ENCODE measurements at regions of chr7 and their contacts with region 1.

Region 1: DNA sequence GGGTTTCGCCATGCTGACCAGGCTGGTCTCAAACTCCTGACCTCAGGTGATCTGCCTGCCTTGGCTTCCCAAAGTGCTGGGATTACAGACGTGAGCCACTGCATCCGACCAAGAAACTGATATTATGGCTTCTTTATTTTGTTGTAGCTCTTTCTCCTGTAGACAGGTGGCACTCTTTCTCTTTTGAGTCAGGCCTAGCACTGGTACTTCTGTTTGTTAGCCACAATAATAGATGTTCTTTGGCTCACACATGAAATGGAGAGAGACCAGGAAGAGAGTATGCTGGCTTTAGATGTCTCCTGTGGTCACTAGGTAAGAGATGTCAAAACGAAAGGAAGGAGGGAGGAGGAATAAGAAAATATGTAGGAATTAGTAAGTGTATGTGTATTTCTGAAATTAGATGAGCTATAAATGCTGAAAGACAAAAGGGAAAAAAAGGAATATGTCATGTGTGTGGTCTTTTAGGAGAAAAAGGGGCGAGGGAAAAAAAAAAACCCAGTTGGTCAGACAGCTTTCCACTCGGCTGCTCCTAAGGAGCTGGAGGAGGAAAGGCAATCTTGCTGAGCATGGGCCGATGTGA is 78.7 kb downstream of the CLEC2L start:
- DNase-seq: peak; percentile 53 to 65 (median 60)
- ATAC-seq: peak; percentile 93
- H3K4me3 ChIP-seq: no peak overlapping the region
- H3K27ac ChIP-seq: no peak overlapping the region
- H3K4me1 ChIP-seq: peaks cover 0 to 9% of the 10 kb centered on the region in 2 experiments; a peak in 3 of 5 replicates
- H3K27me3 ChIP-seq: no peaks in the 10 kb centered on the region
- CTCF ChIP-seq: peak; percentile 68 to 81 (median 69)
- EP300 ChIP-seq: no peak
- POLR2A ChIP-seq: no peak
- RAD21 ChIP-seq: peak; percentile 80 to 89

Region 2: DNA sequence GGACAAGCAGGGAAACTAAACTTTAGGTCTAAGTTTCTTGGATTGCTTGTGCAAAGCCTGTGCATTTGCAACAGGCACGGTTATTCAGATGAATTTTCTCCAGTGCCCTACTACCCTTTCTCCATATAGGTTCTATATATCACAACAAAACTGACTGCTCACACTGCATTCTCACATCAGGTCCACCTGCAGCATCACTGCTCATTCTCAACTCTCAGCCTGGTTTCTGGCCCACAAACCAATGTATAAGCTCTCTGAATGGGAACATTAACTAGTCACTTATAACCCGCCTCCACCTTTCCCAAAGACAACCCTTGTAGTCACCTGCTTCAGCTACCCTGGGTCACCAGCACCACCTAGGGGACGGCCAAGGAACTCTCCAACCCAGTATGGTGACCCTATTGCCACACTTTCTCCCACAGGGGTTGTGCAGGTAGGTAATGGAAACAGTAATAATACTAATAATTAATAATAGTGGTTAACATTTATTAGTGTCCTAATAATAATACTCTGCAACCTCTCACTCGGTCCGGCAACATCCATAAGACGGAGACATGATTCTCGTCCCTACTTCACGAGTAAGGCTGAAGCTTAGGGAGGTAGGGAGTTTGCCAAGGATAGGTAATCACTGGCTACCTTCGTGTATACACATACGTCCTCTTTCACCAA is 18.6 kb after region 1 on chr7:
- CTCF ChIA-PET with region 1: interaction called, 17 read pairs
- POLR2A ChIA-PET with region 1: interaction called, 6 read pairs
- in situ Hi-C with region 1: no loop called
- intact Hi-C with region 1: no loop called
- DNase-seq: peak; percentile 75 to 91 (median 83)
- ATAC-seq: peak; percentile 94
- H3K4me3 ChIP-seq: no peak overlapping the region
- H3K27ac ChIP-seq: no peak overlapping the region
- H3K4me1 ChIP-seq: peaks cover 0 to 6% of the 10 kb centered on the region in 2 experiments; a peak in 2 of 5 replicates
- H3K27me3 ChIP-seq: no peaks in the 10 kb centered on the region
- CTCF ChIP-seq: peak; percentile 91 to 97 (median 95)
- EP300 ChIP-seq: 0 out of 2 replicates have a peak, but pooled peaks have one; percentile 7
- POLR2A ChIP-seq: no peak
- RAD21 ChIP-seq: peak; percentile 80 to 84

Measured in K562 (cell line).